Head of caudate nucleus (tissue), 42 donors: ENCODE measurements at regions of chr9 and their contacts with region 1.

Region 1: GRCh38 chr9:93962561-93963440 is 7.6 kb upstream of the BARX1 start:
- DNase-seq: peak; percentile 59 to 91 (median 80)

Region 2: GRCh38 chr9:93541581-93542349 is 421.0 kb before region 1 on chr9:
- intact Hi-C with region 1: no loop called
- DNase-seq: peak in 1 of 42 donors; percentile 42

Region 3: GRCh38 chr9:93682232-93682968 is 280.4 kb before region 1 on chr9:
- intact Hi-C with region 1: loop called (anchors 5 kb)
- DNase-seq: peak in 41 of 42 donors; percentile 38 to 85 (median 69)